Activated B cell treated with CpG ODN at 0.5 μM for 24 hours (primary cell): ENCODE measurements at regions of chr12 and their contacts with region 1.

Region 1: GRCh38 chr12:31682136-31682962 is 22.9 kb downstream of the ETFBKMT start:
- DNase-seq: peak; percentile 37
- ATAC-seq: peak; percentile 79
- H3K4me3 Mint-ChIP-seq: peak overlapping the region; percentile 64
- H3K27ac Mint-ChIP-seq: peak overlapping the region; percentile 91
- H3K4me1 Mint-ChIP-seq: peaks cover 38% of the 10 kb centered on the region
- H3K27me3 Mint-ChIP-seq: no peaks in the 10 kb centered on the region
- CTCF ChIP-seq: peak; percentile 13

Region 2: DNA sequence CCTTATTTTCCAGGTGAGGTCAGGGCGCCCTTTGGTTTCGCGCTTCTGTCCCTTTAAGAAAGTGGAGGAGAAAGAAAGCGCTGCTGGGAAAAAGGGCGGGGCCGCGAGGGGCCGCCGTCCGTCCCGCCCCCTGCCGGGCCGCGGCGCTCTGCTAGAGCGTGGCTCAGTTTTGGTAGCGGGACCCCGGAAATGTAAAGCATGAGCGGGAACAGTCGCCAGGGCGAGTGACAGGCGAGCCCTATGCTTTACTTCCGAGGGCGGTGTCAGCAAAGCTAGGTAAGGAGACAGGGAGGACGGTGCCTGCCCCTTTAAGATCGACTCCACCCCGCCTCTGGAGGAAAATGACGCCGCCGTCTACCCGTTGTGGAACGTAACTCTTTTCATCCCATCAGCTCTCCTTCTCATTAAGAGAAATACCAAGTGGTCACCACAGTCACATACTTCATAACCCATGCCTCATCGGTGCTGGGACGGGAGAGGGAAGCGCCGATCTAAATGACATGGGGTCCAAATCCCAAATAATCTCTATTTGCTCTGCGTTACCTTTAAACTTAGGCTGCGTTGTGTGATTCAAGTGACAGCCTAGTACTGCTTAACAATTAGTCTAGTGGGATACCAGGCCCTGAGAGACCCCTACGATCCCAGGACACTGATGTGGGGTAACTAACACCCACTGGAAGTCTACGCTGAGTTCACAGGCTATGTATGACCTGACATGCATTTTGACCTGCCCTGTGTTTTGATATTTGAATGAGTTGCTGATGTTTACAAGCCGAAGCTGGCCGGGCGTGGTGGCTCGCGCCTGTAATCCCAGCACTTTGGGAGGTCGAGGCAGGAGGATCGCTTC is 23.0 kb before region 1 on chr12 and contains the start of gene ETFBKMT:
- CTCF ChIA-PET with region 1: interaction called, 15 read pairs
- POLR2A ChIA-PET with region 1: interaction called, 6 read pairs
- intact Hi-C with region 1: loop called (anchors 1 kb)
- DNase-seq: peak; percentile 88
- ATAC-seq: peak; percentile 98
- H3K4me3 Mint-ChIP-seq: peak within 1 kb of the TSS; percentile 96
- H3K27ac Mint-ChIP-seq: peak within 1 kb of the TSS; percentile 99
- H3K4me1 Mint-ChIP-seq: peaks cover 35% of the 10 kb centered on the region
- H3K27me3 Mint-ChIP-seq: no peaks in the 10 kb centered on the region
- CTCF ChIP-seq: no peak
- total RNA-seq, gene ETFBKMT: 0.91 and 2.0 TPM in 2 replicates

Region 3: GRCh38 chr12:31742891-31743290 is 60.5 kb after region 1 on chr12:
- CTCF ChIA-PET with region 1: interaction called, 3 read pairs
- POLR2A ChIA-PET with region 1: interaction called, 31 read pairs
- intact Hi-C with region 1: no loop called
- DNase-seq: no peak
- ATAC-seq: peak; percentile 40
- H3K4me3 Mint-ChIP-seq: peak overlapping the region; percentile 17
- H3K27ac Mint-ChIP-seq: peak overlapping the region; percentile 85
- H3K4me1 Mint-ChIP-seq: peaks cover 87% of the 10 kb centered on the region
- H3K27me3 Mint-ChIP-seq: no peaks in the 10 kb centered on the region
- CTCF ChIP-seq: no peak

Region 4: DNA sequence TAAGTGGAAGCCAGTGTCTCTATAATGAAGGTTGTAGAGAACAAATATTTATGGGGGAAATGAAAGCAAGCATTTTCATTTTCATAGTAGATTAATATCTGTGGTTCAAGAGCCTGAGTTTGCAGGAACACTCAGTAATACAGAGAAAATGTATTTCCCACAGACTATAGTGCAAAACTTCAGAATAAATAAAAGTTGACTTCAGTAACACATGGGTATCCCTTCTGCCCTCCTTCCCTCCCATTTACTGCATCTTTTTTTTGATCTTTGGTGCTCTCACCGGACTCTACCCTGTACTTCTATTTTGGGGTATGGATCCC is 121.8 kb after region 1 on chr12:
- CTCF ChIA-PET with region 1: interaction called, 7 read pairs
- POLR2A ChIA-PET with region 1: interaction called, 32 read pairs
- intact Hi-C with region 1: no loop called
- DNase-seq: no peak
- ATAC-seq: no peak
- H3K4me3 Mint-ChIP-seq: peak overlapping the region; percentile 78
- H3K27ac Mint-ChIP-seq: peak overlapping the region; percentile 88
- H3K4me1 Mint-ChIP-seq: peaks cover 50% of the 10 kb centered on the region
- H3K27me3 Mint-ChIP-seq: no peaks in the 10 kb centered on the region
- CTCF ChIP-seq: no peak

Region 5: GRCh38 chr12:31859232-31859977 is 177.1 kb after region 1 on chr12:
- CTCF ChIA-PET with region 1: no interaction called
- POLR2A ChIA-PET with region 1: interaction called, 5 read pairs
- intact Hi-C with region 1: loop called (anchors 1 kb)
- DNase-seq: peak; percentile 35
- ATAC-seq: peak; percentile 93
- H3K4me3 Mint-ChIP-seq: peak overlapping the region; percentile 61
- H3K27ac Mint-ChIP-seq: peak overlapping the region; percentile 87
- H3K4me1 Mint-ChIP-seq: peaks cover 31% of the 10 kb centered on the region
- H3K27me3 Mint-ChIP-seq: no peaks in the 10 kb centered on the region
- CTCF ChIP-seq: no peak

Region 6: DNA sequence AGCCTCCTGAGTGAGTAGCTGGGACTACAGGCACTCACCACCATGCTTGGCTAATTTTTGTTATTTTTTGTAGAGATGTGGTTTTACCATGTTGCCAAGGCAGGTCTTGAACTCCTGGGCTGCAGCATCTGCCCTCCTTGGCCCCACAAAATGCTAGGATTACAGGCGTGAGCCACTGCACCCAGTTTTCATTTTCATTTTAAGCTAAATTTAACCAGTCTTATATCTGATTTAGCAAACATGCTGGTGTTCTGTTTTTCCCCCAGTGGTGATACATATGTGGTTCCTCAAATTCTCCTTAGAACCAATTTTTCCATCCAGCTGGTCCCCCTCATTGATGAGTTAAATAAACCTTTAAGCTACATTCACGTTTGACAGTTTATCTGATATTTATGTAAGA is 380.5 kb after region 1 on chr12:
- CTCF ChIA-PET with region 1: interaction called, 4 read pairs
- POLR2A ChIA-PET with region 1: no interaction called
- intact Hi-C with region 1: loop called (anchors 1 kb)
- DNase-seq: no peak
- ATAC-seq: no peak
- H3K4me3 Mint-ChIP-seq: no peak overlapping the region
- H3K27ac Mint-ChIP-seq: no peak overlapping the region
- H3K4me1 Mint-ChIP-seq: peaks cover 14% of the 10 kb centered on the region
- H3K27me3 Mint-ChIP-seq: no peaks in the 10 kb centered on the region
- CTCF ChIP-seq: no peak

Region 7: GRCh38 chr12:32302218-32303173 is 620.1 kb after region 1 on chr12:
- CTCF ChIA-PET with region 1: no interaction called
- POLR2A ChIA-PET with region 1: no interaction called
- intact Hi-C with region 1: loop called (anchors 1 kb)
- DNase-seq: peak; percentile 21
- ATAC-seq: peak; percentile 99
- H3K4me3 Mint-ChIP-seq: peak overlapping the region; percentile 74
- H3K27ac Mint-ChIP-seq: peak overlapping the region; percentile 78
- H3K4me1 Mint-ChIP-seq: peaks cover 31% of the 10 kb centered on the region
- H3K27me3 Mint-ChIP-seq: no peaks in the 10 kb centered on the region
- CTCF ChIP-seq: no peak